Sigmoid colon (tissue), 7 donors: ENCODE measurements at regions of chr6 and their contacts with region 1.

Region 1: DNA sequence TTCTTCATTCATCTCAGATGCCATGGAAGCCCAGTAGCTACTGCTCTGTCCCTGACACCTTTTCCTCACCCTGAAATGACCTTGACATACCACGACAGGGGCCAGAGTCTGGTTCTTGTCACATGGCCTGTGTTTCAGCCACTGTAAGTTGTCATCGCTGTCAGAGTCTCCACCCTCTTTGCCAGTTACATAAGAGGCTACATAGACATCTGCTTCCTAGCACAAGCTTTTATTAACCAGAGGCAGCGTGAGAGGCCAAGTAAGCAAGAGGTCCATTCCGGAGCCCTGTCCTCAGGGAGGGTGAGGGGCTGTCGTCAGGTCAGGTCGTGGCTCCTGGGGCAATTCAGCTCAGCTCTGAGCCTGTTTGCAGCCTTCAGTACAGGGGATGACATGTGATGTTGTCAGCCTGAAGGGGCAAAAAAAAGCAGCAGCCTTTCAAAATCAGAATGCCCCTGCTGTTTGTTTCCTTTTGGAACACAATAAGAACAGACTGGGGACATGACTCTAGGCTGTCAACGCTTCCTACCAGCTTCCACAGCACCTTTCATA is 146.3 kb downstream of the MTFR2 start:
- DNase-seq: peak; percentile 86
- H3K4me3 ChIP-seq: no peak overlapping the region
- H3K27ac ChIP-seq: peak overlapping the region; percentile 65 to 71 (median 70)
- H3K4me1 ChIP-seq: peaks cover 0 to 23% (median 14%) of the 10 kb centered on the region in 4 donors
- H3K27me3 ChIP-seq: no peaks in the 10 kb centered on the region
- CTCF ChIP-seq: no peak
- EP300 ChIP-seq: peak in 3 of 4 donors; percentile 51 to 78 (median 58)
- POLR2A ChIP-seq: no peak

Region 2: GRCh38 chr6:135922174-135922573 is 181.7 kb before region 1 on chr6:
- intact Hi-C with region 1: loop called (anchors 1 kb)
- DNase-seq: peak; percentile 72
- H3K4me3 ChIP-seq: no peak overlapping the region
- H3K27ac ChIP-seq: peak overlapping the region in 3 of 4 donors; percentile 62 to 71 (median 70)
- H3K4me1 ChIP-seq: peaks cover 0 to 29% (median 21%) of the 10 kb centered on the region in 4 donors
- H3K27me3 ChIP-seq: peaks cover 0 to 5% (median 4%) of the 10 kb centered on the region in 3 donors
- CTCF ChIP-seq: no peak
- EP300 ChIP-seq: peak in 1 of 4 donors; percentile 2
- POLR2A ChIP-seq: no peak

Region 3: DNA sequence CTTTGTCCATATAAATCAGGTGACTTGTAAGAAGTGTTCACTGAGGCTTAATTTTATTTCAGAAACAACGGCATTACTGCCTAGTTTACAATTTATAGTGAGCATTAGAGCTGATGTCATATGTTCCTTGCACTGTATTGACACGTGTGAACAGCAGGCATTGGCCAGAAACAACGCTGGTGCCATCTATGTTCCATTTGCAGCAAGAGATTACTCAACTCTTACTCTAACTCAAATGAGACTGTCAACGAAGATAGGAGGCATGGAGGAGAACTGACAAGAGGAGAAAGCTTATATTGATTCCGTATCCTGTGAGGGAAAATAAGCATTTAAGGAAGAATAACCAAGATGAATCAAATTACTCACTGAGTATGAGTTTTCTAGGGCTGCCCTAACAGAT is 97.9 kb after region 1 on chr6:
- intact Hi-C with region 1: no loop called
- DNase-seq: no peak
- H3K4me3 ChIP-seq: no peak overlapping the region
- H3K27ac ChIP-seq: no peak overlapping the region
- H3K4me1 ChIP-seq: no peaks in the 10 kb centered on the region
- H3K27me3 ChIP-seq: no peaks in the 10 kb centered on the region
- CTCF ChIP-seq: no peak
- EP300 ChIP-seq: no peak
- POLR2A ChIP-seq: no peak